ENCODE measurements at regions of chr19 and their contacts with region 1.

Region 1: GRCh38 chr19:13784731-13785452 is 10.4 kb upstream of the ZSWIM4 start:
- DNase-seq: peak; percentile 90
- H3K4me3 ChIP-seq: no peak overlapping the region
- H3K27ac ChIP-seq: peak overlapping the region; percentile 20 to 36; a peak in 2 of 4 replicates
- H3K4me1 ChIP-seq: peaks cover 5 to 30% of the 10 kb centered on the region in 2 experiments; a peak in 3 of 4 replicates
- H3K27me3 ChIP-seq: no peaks in the 10 kb centered on the region
- CTCF ChIP-seq: peak; percentile 74
- EP300 ChIP-seq: no peak
- RAD21 ChIP-seq: peak; percentile 82

Region 2: DNA sequence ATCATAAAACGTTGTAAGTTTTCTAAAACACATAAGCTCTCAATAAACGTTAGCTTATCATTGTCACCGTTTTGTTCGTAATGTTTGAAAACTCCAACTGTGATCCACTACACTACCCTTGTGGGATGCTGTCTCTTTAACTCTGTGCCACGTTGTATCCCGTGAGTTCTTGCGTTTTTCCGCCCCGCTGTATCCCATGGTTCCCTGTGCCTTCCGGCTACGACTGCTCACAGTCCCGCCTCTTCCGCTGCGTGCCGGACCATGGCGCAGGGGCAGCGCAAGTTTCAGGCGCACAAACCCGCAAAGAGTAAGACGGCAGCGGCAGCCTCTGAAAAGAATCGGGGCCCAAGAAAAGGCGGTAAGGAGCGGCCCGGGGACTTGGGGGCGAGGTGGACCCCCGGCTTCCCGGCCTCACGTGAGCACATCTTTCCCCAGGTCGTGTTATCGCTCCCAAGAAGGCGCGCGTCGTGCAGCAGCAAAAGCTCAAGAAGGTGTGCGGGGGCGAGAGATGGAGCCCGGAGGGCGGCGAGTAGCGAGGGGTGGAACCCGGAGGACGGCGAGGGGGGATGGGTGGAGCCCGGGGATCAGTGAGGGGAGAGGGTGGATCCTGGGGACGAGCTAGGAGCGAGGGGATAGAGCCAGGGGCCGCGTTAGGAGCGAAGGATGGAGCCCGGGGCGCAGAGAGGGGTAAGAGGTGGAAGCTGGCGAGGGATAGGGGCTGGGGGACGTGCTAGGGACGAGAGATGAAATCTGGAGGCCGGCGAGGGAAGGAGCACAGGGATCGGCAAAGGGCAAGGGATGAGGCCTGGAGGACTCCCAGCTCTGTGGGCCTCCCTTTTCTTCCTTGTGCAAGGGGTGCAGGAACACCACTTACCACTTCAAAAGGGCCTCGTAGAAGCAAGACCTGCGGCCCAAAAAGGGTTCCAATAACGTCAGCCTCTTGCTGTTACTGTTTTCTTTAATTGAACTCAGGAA is 10.4 kb before region 1 on chr19 and contains the start of gene C19orf53:
- CTCF ChIA-PET with region 1: interaction called, 11 read pairs
- POLR2A ChIA-PET with region 1: interaction called, 4 read pairs
- DNase-seq: peak; percentile 93
- H3K4me3 ChIP-seq: peak within 1 kb of the TSS; percentile 74 to 94
- H3K27ac ChIP-seq: peak within 1 kb of the TSS; percentile 83 to 91
- H3K4me1 ChIP-seq: peaks cover 6 to 8% of the 10 kb centered on the region in 2 experiments; a peak in 2 of 4 replicates
- H3K27me3 ChIP-seq: no peaks in the 10 kb centered on the region
- CTCF ChIP-seq: no peak
- EP300 ChIP-seq: no peak
- RAD21 ChIP-seq: no peak
- polyA plus RNA-seq, gene C19orf53: 470 and 554 TPM in 2 replicates

Region 3: GRCh38 chr19:13794757-13795589 is 10.1 kb after region 1 on chr19 and contains the start of gene ZSWIM4:
- CTCF ChIA-PET with region 1: interaction called, 10 read pairs
- POLR2A ChIA-PET with region 1: no interaction called
- DNase-seq: peak; percentile 98
- H3K4me3 ChIP-seq: peak within 1 kb of the TSS; percentile 76 to 98
- H3K27ac ChIP-seq: peak within 1 kb of the TSS; percentile 88 to 99
- H3K4me1 ChIP-seq: peaks cover 15 to 18% of the 10 kb centered on the region in 2 experiments; a peak in 3 of 4 replicates
- H3K27me3 ChIP-seq: no peaks in the 10 kb centered on the region
- CTCF ChIP-seq: no peak
- EP300 ChIP-seq: no peak
- RAD21 ChIP-seq: no peak
- polyA plus RNA-seq, gene ZSWIM4: 3.5 and 4.7 TPM in 2 replicates

Region 4: GRCh38 chr19:13846557-13847406 is 61.9 kb after region 1 on chr19:
- CTCF ChIA-PET with region 1: interaction called, 11 read pairs
- POLR2A ChIA-PET with region 1: interaction called, 3 read pairs
- DNase-seq: peak; percentile 91
- H3K4me3 ChIP-seq: peak overlapping the region; percentile 52 to 65
- H3K27ac ChIP-seq: peak overlapping the region; percentile 100
- H3K4me1 ChIP-seq: peaks cover 40 to 44% of the 10 kb centered on the region in 2 experiments; a peak in 3 of 4 replicates
- H3K27me3 ChIP-seq: no peaks in the 10 kb centered on the region
- CTCF ChIP-seq: no peak
- EP300 ChIP-seq: peak; percentile 23 to 55; a peak in 2 of 4 replicates
- RAD21 ChIP-seq: no peak

Region 5: GRCh38 chr19:13856497-13856896 is 71.6 kb after region 1 on chr19:
- CTCF ChIA-PET with region 1: interaction called, 133 read pairs
- POLR2A ChIA-PET with region 1: no interaction called
- DNase-seq: no peak
- H3K4me3 ChIP-seq: no peak overlapping the region
- H3K27ac ChIP-seq: no peak overlapping the region
- H3K4me1 ChIP-seq: peaks cover 3 to 11% of the 10 kb centered on the region in 2 experiments; a peak in 3 of 4 replicates
- H3K27me3 ChIP-seq: no peaks in the 10 kb centered on the region
- CTCF ChIP-seq: no peak
- EP300 ChIP-seq: no peak
- RAD21 ChIP-seq: no peak

Measured in SK-N-SH (cell line).